ENCODE measurements at regions of chrX and their contacts with region 1.

Region 1: DNA sequence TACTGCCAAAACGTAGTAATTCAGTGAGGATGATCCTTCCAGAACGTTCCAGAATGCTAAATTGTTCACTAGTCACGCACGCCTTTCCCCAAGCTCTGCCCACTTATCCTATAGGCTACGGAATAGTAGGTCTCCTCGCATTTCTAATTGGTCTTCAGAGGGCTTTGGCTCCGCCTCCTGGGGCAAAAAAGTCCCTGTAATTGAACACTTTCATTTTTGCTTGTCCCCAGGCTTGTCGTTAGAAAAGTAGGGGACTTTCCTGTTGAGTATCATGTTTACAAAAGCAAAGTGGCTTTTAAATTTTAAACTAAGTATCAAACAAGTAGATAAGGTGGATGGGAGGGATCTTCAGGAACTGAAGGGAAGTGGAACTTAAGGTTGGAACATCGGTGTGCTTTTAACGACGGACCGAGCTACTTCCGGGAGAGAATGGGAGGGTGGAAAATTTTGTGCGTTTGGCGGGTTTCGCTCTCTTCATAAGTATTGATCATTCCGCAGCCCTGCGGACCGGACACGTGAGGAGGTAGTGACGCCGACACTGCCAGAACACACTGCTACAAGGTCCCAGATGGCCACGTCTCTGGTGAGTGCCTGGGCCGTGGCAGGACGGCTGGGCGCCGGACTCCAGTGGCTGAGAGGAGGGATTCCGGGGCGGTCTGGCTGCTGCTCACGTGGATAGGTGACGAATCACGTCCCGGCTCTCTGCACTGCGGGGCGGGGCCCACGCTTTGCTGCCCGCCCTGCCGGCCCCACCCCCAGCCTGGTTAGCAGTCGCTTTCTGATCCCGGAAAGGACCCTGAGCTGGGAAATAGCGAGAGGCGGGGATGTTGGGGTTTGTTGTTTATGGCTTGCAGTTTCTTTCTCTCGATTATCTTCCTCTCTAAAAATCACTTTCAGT is at the start of gene NXT2:
- DNase-seq: peak; percentile 68 to 94 (median 81)
- ATAC-seq: peak; percentile 98
- H3K4me3 ChIP-seq: peak within 1 kb of the TSS; percentile 79
- H3K4me3 Mint-ChIP-seq: peak within 1 kb of the TSS; percentile 84
- H3K27ac ChIP-seq: peak within 1 kb of the TSS; percentile 81 to 92
- H3K27ac Mint-ChIP-seq: peak within 1 kb of the TSS; percentile 88
- H3K4me1 ChIP-seq: peaks cover 2% of the 10 kb centered on the region
- H3K4me1 Mint-ChIP-seq: peaks cover 13% of the 10 kb centered on the region
- H3K27me3 ChIP-seq: peaks cover 2 to 3% of the 10 kb centered on the region in 2 experiments
- H3K27me3 Mint-ChIP-seq: peaks cover 26% of the 10 kb centered on the region
- CTCF ChIP-seq: no peak
- total RNA-seq, gene NXT2: 4.0 to 4.1 TPM

Region 2: DNA sequence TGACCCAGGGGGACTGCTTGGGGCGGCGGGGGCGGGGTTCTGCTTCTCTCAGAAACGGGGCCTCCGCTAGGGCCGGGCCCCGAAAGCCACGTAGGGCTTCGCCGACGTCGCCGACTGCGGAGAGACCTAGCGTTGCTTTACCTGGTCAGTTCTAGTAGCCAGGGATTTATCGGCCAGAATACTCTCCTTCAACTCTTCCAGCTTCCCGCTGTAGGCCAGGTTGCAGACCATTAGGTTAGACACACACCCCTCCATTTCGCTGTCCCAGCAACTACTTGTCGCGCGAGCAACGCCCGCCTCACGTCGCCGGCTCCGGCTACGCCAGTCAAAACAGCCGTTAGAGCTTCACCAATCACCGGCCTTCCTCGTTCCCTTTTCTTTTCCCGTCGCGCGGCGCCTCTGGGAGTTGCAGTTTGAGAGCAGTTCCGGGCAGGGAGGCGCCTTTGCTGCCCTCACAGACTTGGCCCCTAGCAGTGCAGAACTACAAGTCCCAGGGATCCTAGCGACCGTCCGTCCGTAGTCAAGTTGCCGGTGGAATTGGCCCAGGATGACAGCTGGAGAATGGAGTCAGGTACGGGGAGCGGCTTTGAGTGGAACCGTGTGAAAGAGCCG is 1445.3 kb before region 1 on chrX and contains the starts of genes ATG4A and PSMD10:
- CTCF ChIA-PET with region 1: no interaction called
- POLR2A ChIA-PET with region 1: no interaction called
- intact Hi-C with region 1: loop called in 1 of 2 experiments (anchors 5 kb)
- DNase-seq: peak; percentile 75 to 95 (median 84)
- ATAC-seq: peak; percentile 95
- H3K4me3 ChIP-seq: peak within 1 kb of the TSS; percentile 87
- H3K4me3 Mint-ChIP-seq: no peak within 1 kb of the TSS
- H3K27ac ChIP-seq: peak within 1 kb of the TSS; percentile 72 to 87
- H3K27ac Mint-ChIP-seq: no peak within 1 kb of the TSS
- H3K4me1 ChIP-seq: peaks cover 11% of the 10 kb centered on the region
- H3K4me1 Mint-ChIP-seq: peaks cover 8% of the 10 kb centered on the region
- H3K27me3 ChIP-seq: no peaks in the 10 kb centered on the region
- H3K27me3 Mint-ChIP-seq: no peaks in the 10 kb centered on the region
- CTCF ChIP-seq: no peak
- total RNA-seq, gene ATG4A: 2.9 to 4.0 TPM
- total RNA-seq, gene PSMD10: 18.6 to 24.1 TPM